ENCODE measurements at regions of chr3 and their contacts with region 1.

Region 1: DNA sequence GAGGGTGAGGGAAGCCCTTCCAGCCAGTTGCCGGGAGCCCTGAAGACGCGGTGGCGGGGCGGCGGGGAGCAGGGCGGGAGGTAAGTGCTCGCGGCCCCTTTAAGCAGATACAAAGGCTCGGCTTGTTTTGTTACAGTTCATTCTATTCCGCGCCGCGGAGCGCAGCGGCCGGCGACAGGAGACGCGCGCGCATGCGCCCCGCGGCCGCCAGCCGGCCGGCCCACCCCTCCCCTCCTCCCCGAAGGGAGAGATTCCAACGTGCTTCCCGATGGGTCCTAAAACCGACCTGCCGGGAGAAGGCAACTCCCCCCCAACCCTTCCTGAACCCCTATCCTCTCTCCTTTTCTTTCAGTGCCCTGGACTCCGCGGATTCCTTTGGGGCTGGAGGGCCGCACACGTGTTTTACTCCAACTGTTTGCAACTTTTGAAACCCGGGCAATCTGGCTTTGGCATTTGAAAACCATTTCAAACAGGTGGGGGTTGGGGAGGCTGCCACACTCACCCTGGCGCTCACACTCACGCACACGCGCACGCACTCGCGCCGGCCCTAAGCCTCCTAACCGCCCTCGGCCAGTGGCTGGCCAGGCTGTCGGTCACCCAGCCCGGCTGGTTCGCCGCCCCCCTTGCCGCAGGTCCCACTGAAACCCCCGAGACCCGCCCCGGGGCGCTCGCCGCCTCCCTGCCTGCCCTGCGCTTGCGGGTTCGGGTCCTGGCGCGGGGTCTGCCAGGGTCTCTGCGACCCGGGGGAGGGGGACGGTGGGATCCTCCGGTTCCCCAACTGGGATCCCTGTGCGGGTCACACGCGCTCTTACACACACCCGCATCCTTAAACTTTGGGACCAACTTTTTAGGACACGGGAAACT is at the start of gene MAGI1:
- DNase-seq: peak; percentile 91 to 94 (median 92)
- ATAC-seq: peak; percentile 87 to 92 (median 90)
- H3K4me3 ChIP-seq: peak within 1 kb of the TSS; percentile 52 to 97 (median 90)
- H3K27ac ChIP-seq: peak within 1 kb of the TSS; percentile 85 to 98 (median 94)
- H3K4me1 ChIP-seq: peaks cover 0 to 31% (median 15%) of the 10 kb centered on the region in 12 donors
- H3K27me3 ChIP-seq: peaks cover 0 to 32% (median 0%) of the 10 kb centered on the region in 9 donors
- CTCF ChIP-seq: peak in 1 of 12 donors; percentile 6
- POLR2A ChIP-seq: peak in 1 of 2 donors; percentile 77
- total RNA-seq, gene MAGI1: 27.1 to 52.1 (median 35.9) TPM

Region 2: DNA sequence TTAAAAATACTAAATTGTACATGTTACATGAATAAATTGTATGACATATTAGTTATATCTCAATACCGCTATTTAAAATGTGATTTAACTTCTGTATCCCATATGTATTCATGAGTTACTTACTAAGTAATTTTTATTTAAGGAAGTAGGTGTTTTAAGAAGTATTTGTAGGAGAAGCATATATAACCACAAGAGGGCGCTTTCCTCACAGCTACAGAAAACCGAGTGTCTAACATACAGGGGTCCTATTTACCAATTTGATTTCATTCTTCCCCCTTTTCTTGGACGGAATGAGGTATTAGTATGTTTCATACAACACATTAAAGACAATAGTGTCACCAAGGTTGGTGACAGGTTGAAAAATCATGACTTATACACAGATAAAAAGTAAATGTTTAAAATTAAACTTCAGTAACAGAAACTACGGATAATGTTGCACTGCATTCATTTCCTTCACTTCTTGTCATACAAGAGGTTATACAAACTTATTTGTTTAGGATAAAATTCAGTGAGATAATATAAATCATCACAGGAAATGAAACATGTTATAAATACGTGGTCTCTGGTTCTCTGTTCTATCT is 253.8 kb before region 1 on chr3:
- intact Hi-C with region 1: loop called in 9 of 10 experiments (anchors 2 to 10 kb)
- DNase-seq: no peak
- ATAC-seq: peak in 2 of 4 donors; percentile 38 to 53
- H3K4me3 ChIP-seq: no peak overlapping the region
- H3K27ac ChIP-seq: no peak overlapping the region
- H3K4me1 ChIP-seq: peaks cover 0 to 30% (median 12%) of the 10 kb centered on the region in 12 donors
- H3K27me3 ChIP-seq: no peaks in the 10 kb centered on the region
- CTCF ChIP-seq: peak; percentile 63 to 89 (median 76)
- POLR2A ChIP-seq: no peak

Region 3: DNA sequence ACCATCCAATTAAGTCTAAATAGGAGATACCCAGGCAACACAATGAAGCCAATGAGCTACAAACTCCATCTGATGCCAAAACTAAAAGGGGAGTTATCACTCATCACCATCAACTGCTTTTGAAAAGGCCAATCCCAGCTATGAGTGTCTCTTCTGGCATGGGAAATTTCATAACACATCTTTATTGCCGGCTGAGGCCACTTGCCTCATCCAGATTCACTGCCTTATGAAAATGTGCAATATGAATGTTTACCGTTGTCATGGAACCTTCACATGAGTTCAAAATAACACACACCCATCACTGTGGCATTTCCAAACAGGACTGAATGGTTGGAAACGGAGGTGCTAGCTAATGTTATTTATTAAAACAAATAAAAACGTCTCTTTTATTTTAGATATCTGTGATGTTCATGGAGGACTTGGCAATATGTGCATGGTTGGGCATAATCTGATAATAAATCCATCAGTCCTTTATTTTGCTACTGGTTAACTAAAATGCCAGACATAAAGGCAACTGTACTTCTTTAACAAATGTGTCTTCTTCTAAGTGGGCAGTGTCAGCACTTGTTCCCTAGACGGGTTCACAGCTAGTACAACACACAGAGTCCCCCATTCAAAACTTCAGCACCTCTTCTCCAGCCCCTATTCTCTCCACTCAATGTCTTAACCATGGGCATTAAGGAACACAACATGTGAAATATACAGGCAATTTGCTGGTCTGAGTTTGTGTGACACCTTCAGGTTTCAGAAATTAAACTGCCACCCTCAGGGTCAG is 144.1 kb before region 1 on chr3:
- intact Hi-C with region 1: loop called in 1 of 10 experiments (anchors 5 kb)
- DNase-seq: no peak
- ATAC-seq: peak in 1 of 4 donors; percentile 44
- H3K4me3 ChIP-seq: no peak overlapping the region
- H3K27ac ChIP-seq: no peak overlapping the region
- H3K4me1 ChIP-seq: peaks cover 0 to 29% (median 8%) of the 10 kb centered on the region in 12 donors
- H3K27me3 ChIP-seq: no peaks in the 10 kb centered on the region
- CTCF ChIP-seq: no peak
- POLR2A ChIP-seq: no peak

Region 4: GRCh38 chr3:65953301-65953812 is 85.6 kb before region 1 on chr3:
- intact Hi-C with region 1: loop called in 5 of 10 experiments (anchors 5 kb)
- DNase-seq: peak in 3 of 5 donors; percentile 19 to 40 (median 28)
- ATAC-seq: peak; percentile 44 to 59 (median 50)
- H3K4me3 ChIP-seq: peak overlapping the region in 3 of 12 donors; percentile 18 to 35 (median 18)
- H3K27ac ChIP-seq: peak overlapping the region; percentile 29 to 81 (median 75)
- H3K4me1 ChIP-seq: peaks cover 14 to 69% (median 46%) of the 10 kb centered on the region in 12 donors
- H3K27me3 ChIP-seq: no peaks in the 10 kb centered on the region
- CTCF ChIP-seq: no peak
- POLR2A ChIP-seq: no peak

Region 5: GRCh38 chr3:65988411-65989180 is 50.4 kb before region 1 on chr3:
- intact Hi-C with region 1: loop called in 1 of 10 experiments (anchors 5 kb)
- DNase-seq: no peak
- ATAC-seq: no peak
- H3K4me3 ChIP-seq: no peak overlapping the region
- H3K27ac ChIP-seq: peak overlapping the region in 1 of 12 donors; percentile 11
- H3K4me1 ChIP-seq: peaks cover 0 to 80% (median 19%) of the 10 kb centered on the region in 12 donors
- H3K27me3 ChIP-seq: no peaks in the 10 kb centered on the region
- CTCF ChIP-seq: no peak
- POLR2A ChIP-seq: no peak

Region 6: DNA sequence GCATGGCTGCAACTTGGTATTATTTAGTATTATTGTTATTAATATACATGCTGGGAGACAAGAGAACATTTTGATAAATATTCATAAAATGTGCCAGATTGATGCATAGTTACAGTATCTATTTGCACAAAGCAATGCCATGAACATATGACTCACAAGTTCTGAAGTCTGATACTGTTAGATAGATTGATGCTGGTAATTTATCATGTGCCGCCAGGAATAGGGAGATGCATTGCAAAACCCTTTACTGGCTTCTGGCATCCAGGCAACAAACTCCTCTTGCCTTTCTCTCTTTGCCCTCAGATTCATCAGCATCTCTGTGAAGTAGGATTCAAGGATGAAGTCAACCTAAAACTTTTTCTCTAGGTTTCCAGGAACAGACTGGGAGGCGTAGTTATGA is 140.8 kb after region 1 on chr3:
- intact Hi-C with region 1: loop called in 1 of 10 experiments (anchors 5 kb)
- DNase-seq: no peak
- ATAC-seq: no peak
- H3K4me3 ChIP-seq: no peak overlapping the region
- H3K27ac ChIP-seq: peak overlapping the region in 11 of 12 donors; percentile 17 to 94 (median 73)
- H3K4me1 ChIP-seq: peaks cover 0 to 53% (median 14%) of the 10 kb centered on the region in 12 donors
- H3K27me3 ChIP-seq: no peaks in the 10 kb centered on the region
- CTCF ChIP-seq: no peak
- POLR2A ChIP-seq: no peak

Region 7: DNA sequence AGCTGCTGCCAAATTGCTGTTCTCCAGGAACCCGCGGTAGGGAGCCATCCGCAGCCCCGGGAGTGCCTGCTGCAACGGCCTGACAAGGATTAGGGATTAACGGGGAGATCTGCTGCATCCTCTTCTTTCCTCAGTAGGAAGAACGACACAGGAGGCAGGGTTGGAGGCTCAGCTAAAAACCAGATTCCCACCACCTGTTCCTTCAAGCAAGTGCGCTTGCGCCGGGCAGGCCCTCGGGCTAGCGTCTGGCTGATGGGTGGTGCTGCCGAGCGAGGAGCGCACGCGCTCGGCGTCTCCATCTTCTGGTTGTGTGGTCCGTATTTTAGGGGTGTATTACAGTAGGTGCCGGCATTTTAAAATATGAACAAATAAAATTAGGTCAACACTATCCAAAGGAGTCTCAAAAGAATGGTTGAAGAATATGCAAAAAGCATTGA is 156.4 kb after region 1 on chr3:
- intact Hi-C with region 1: loop called in 4 of 10 experiments (anchors 2 to 10 kb)
- DNase-seq: peak; percentile 57 to 81 (median 72)
- ATAC-seq: peak; percentile 41 to 76 (median 73)
- H3K4me3 ChIP-seq: peak overlapping the region in 11 of 12 donors; percentile 1 to 56 (median 41)
- H3K27ac ChIP-seq: peak overlapping the region in 11 of 12 donors; percentile 20 to 85 (median 57)
- H3K4me1 ChIP-seq: peaks cover 0 to 4% (median 0%) of the 10 kb centered on the region in 12 donors
- H3K27me3 ChIP-seq: peaks cover 0 to 10% (median 0%) of the 10 kb centered on the region in 9 donors
- CTCF ChIP-seq: peak in 5 of 12 donors; percentile 13 to 48 (median 27)
- POLR2A ChIP-seq: no peak

Measured in heart left ventricle (tissue), 16 donors.